ENCODE measurements at regions of chr1 and their contacts with region 1.

Region 1: GRCh38 chr1:202998836-202999750 is 8.1 kb upstream of the TMEM183A start:
- DNase-seq: no peak
- ATAC-seq: peak; percentile 75
- H3K4me3 Mint-ChIP-seq: peak overlapping the region; percentile 74
- H3K27ac Mint-ChIP-seq: peak overlapping the region; percentile 81
- H3K4me1 Mint-ChIP-seq: peaks cover 18% of the 10 kb centered on the region
- H3K27me3 Mint-ChIP-seq: peaks cover 2% of the 10 kb centered on the region
- CTCF ChIP-seq: peak; percentile 56

Region 2: DNA sequence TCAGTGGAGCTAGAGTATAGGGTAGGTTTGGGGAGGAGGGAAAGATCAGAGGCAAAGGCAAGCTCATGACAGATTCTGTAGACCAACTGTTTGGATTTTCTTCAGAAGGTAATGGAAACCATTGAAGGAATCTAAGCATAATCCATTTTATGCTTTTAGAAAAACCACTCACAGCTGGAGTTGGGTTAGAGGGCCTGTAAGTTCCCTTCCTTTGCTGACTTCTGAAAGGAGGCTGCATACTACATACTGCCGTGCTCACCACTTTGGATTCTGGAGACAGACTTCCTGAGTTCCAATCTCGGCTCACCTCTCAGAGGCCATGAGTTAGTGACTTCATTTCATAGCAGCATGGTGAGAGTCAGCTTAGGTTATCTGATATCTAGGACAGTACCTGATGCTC is 282.4 kb before region 1 on chr1:
- CTCF ChIA-PET with region 1: no interaction called
- POLR2A ChIA-PET with region 1: no interaction called
- intact Hi-C with region 1: loop called (anchors 1 kb)
- DNase-seq: no peak
- ATAC-seq: no peak
- H3K4me3 Mint-ChIP-seq: no peak overlapping the region
- H3K27ac Mint-ChIP-seq: no peak overlapping the region
- H3K4me1 Mint-ChIP-seq: peaks cover 2% of the 10 kb centered on the region
- H3K27me3 Mint-ChIP-seq: peaks cover 18% of the 10 kb centered on the region
- CTCF ChIP-seq: no peak

Region 3: GRCh38 chr1:202825759-202826158 is 173.3 kb before region 1 on chr1:
- CTCF ChIA-PET with region 1: no interaction called
- POLR2A ChIA-PET with region 1: interaction called, 10 read pairs
- intact Hi-C with region 1: no loop called
- DNase-seq: no peak
- ATAC-seq: no peak
- H3K4me3 Mint-ChIP-seq: no peak overlapping the region
- H3K27ac Mint-ChIP-seq: no peak overlapping the region
- H3K4me1 Mint-ChIP-seq: peaks cover 2% of the 10 kb centered on the region
- H3K27me3 Mint-ChIP-seq: peaks cover 17% of the 10 kb centered on the region
- CTCF ChIP-seq: no peak

Region 4: GRCh38 chr1:202957733-202958543 is 41.2 kb before region 1 on chr1 and contains the start of gene ADIPOR1:
- CTCF ChIA-PET with region 1: no interaction called
- POLR2A ChIA-PET with region 1: no interaction called
- intact Hi-C with region 1: loop called (anchors 2 kb)
- DNase-seq: peak; percentile 92
- ATAC-seq: peak; percentile 99
- H3K4me3 Mint-ChIP-seq: peak within 1 kb of the TSS; percentile 90
- H3K27ac Mint-ChIP-seq: peak within 1 kb of the TSS; percentile 86
- H3K4me1 Mint-ChIP-seq: peaks cover 34% of the 10 kb centered on the region
- H3K27me3 Mint-ChIP-seq: no peaks in the 10 kb centered on the region
- CTCF ChIP-seq: no peak
- total RNA-seq, gene ADIPOR1: 44.4 and 45.0 TPM in 2 replicates

Measured in activated B cell treated with CpG ODN at 0.5 μM for 24 hours (primary cell).